Heart left ventricle (tissue), 16 donors: ENCODE measurements at regions of chr21 and their contacts with region 1.

Region 1: DNA sequence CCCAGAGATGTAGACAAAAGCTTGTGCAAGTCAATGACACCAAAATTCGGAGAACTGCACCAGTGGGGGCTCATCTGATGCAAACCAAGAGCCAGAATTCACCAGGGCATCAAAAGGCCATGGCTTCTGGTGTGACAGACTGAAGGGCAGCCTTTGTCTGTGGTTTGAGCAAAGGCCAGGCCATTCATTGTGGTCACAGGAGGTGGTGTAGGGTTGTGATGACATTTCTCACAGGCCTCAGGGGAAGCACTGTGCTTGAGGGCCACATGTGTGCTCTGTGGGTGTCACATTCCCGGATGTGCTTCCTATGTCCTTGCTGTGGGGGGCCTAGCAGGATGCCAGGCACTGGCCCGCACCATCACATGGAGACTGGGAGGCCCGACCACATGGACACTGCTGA is 22.5 kb upstream of the KCNE1 start:
- DNase-seq: no peak
- ATAC-seq: no peak
- H3K4me3 ChIP-seq: no peak overlapping the region
- H3K27ac ChIP-seq: no peak overlapping the region
- H3K4me1 ChIP-seq: peaks cover 0 to 42% (median 21%) of the 10 kb centered on the region in 12 donors
- H3K27me3 ChIP-seq: no peaks in the 10 kb centered on the region
- CTCF ChIP-seq: no peak
- POLR2A ChIP-seq: no peak

Region 2: DNA sequence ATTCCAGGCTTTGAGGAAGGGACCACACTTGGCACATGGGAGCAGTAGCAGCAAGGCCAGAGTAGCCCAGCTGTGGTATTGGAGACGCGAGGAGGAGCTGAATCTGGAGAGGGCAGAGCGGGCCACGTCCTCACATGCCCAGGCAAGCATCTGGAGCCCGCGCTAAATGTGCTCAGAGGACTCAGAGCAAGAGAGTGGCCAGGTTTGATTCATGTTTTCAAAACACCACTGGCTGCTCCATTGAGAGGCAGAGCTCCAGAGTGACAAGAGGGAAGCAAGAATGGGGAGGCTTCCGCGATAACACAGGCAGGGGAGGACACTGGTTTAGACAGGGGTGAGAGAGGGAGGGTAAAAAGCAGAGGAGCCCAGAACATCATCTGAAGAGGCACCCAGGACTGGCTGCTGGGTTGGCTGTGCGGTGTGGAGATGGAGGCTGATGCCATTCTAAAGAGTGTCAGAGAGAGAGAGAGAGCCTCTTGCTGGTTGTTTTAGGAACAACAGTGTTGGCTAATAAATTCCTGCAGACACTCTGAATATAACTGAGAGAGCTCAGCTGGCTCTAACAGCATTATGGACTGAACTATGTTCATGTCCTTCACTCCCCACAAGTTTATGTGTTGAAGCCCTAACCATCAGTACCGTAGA is 48.1 kb after region 1 on chr21:
- intact Hi-C with region 1: loop called in 8 of 10 experiments (anchors 5 kb)
- DNase-seq: peak in 3 of 5 donors; percentile 40 to 59 (median 52)
- ATAC-seq: peak; percentile 70 to 80 (median 76)
- H3K4me3 ChIP-seq: no peak overlapping the region
- H3K27ac ChIP-seq: peak overlapping the region in 11 of 12 donors; percentile 56 to 95 (median 80)
- H3K4me1 ChIP-seq: peaks cover 0 to 72% (median 37%) of the 10 kb centered on the region in 12 donors
- H3K27me3 ChIP-seq: no peaks in the 10 kb centered on the region
- CTCF ChIP-seq: peak; percentile 14 to 51 (median 42)
- POLR2A ChIP-seq: no peak

Region 3: DNA sequence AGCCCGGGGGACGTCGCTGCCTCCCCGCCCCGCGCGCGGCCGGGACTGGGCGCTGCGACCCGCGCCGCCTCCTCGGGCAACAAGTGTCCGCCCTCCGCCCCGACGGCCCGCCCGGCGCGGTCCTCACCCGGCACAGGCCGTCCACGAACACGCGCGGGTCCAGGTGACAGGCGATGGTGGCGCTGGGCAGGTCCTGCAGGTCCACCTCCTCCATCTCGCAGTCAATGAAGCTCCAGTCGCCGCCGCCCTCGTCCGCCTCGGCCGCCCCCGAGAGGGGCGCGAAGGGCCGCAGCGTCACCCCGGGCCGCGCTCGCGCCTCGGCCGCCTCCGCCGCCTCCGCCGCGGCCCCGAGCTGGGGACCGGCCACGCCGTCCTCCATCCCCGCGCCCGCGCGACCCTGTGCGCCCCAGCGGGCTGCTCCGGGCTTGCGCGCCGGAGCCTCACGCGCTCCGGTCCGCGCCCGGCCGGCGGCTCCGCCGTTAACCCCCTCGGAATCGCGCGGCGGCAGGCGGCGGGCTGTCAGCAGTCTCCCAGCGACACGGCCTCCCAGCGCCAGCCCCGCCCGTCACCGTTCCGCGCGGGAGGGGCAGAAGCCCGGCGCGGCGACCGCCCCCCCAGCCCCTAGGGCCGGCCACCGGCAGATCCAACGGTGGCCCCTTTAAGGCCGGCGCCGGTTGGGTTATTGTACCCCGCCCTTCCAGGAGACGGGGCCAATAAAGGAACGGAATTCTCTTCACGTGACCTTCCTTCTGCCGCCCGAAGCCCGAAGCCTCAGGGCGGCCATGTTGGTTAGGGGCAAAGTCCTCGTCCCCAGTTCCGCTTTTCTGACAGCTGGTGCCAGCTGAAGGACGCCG is 80.3 kb after region 1 on chr21 and contains the start of gene RCAN1:
- intact Hi-C with region 1: no loop called
- DNase-seq: peak; percentile 92 to 95 (median 92)
- ATAC-seq: peak; percentile 98 to 99 (median 98)
- H3K4me3 ChIP-seq: peak within 1 kb of the TSS; percentile 56 to 99 (median 82)
- H3K27ac ChIP-seq: peak within 1 kb of the TSS; percentile 78 to 95 (median 89)
- H3K4me1 ChIP-seq: peaks cover 3 to 51% (median 28%) of the 10 kb centered on the region in 12 donors
- H3K27me3 ChIP-seq: no peaks in the 10 kb centered on the region
- CTCF ChIP-seq: no peak
- POLR2A ChIP-seq: peak in 1 of 2 donors; percentile 52
- total RNA-seq, gene RCAN1: 33.7 to 102 (median 57.6) TPM

Region 4: GRCh38 chr21:34630536-34631143 is 96.1 kb after region 1 on chr21:
- intact Hi-C with region 1: no loop called
- DNase-seq: peak in 1 of 5 donors; percentile 28
- ATAC-seq: peak; percentile 29 to 74 (median 68)
- H3K4me3 ChIP-seq: no peak overlapping the region
- H3K27ac ChIP-seq: no peak overlapping the region
- H3K4me1 ChIP-seq: peaks cover 0 to under 1% (median 0%) of the 10 kb centered on the region in 12 donors
- H3K27me3 ChIP-seq: peaks cover 0 to 10% (median 0%) of the 10 kb centered on the region in 9 donors
- CTCF ChIP-seq: peak; percentile 67 to 89 (median 77)
- POLR2A ChIP-seq: no peak

Region 5: DNA sequence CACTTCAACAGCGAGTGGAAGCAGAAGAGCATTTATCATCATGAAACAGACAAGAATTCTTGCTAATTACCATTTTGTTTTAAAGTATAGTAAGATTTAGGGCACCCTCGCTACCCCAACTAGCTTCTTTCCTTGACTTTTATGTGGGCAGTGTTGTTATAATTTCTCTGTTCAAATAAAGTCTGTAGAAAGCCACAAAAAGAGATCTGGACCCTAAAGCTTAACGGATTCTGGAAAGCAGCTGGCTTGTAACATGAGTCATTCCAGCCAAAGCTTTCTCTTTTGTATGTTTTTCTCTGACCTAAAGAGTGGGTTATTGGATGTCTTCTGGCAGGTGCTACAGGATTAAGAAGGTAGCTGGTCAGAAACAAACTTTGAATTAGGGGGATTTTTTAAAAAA is 477.2 kb after region 1 on chr21:
- intact Hi-C with region 1: no loop called
- DNase-seq: no peak
- ATAC-seq: no peak
- H3K4me3 ChIP-seq: no peak overlapping the region
- H3K27ac ChIP-seq: no peak overlapping the region
- H3K4me1 ChIP-seq: peaks cover 0 to 16% (median 0%) of the 10 kb centered on the region in 12 donors
- H3K27me3 ChIP-seq: peaks cover 0 to 12% (median 0%) of the 10 kb centered on the region in 9 donors
- CTCF ChIP-seq: no peak
- POLR2A ChIP-seq: no peak